ENCODE measurements at regions of chr7 and their contacts with region 1.

Region 1: DNA sequence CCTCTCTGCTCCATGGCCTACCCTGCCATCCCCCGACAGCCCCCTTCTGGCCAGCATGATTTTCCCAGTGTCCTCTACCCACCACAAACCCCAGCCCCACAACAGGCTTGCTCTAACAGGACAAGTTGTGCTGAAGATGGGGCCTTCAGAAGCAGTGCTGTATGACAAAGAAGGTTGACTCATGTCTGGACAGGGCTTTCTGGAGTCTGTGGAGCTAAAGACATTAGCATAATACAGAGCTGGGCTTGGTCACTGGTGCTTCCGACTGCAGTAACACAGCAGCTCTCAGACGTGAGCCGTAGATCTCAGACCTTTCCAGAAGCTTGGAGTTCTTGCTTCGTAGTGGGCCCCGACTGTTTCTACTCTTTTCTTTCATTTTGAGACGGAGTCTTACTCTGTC is 100.5 kb downstream of the GTF2IRD1 start:
- DNase-seq: no peak
- H3K4me3 ChIP-seq: no peak overlapping the region
- CTCF ChIP-seq: no peak
- POLR2A ChIP-seq: no peak

Region 2: DNA sequence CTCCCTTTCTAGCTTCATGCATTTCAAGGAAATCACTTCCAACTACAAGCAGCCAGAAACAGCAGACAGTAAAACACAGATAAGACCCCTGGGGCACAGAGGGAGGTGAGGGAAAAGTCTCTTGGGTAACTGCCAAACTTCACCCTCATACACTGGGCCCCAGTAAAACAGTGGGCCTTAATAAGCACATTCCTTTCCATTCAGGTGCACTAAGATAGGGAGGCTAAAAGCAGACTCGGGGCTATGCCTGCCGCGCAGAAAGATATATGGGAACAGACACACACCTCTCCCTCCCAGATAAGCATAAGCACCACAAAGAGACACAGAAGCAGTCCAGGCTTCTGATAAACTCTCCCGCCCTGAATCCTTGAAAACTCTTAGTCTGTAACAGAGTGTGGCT is 1843.2 kb before region 1 on chr7:
- intact Hi-C with region 1: no loop called
- DNase-seq: no peak
- H3K4me3 ChIP-seq: no peak overlapping the region
- CTCF ChIP-seq: no peak
- POLR2A ChIP-seq: no peak

Region 3: DNA sequence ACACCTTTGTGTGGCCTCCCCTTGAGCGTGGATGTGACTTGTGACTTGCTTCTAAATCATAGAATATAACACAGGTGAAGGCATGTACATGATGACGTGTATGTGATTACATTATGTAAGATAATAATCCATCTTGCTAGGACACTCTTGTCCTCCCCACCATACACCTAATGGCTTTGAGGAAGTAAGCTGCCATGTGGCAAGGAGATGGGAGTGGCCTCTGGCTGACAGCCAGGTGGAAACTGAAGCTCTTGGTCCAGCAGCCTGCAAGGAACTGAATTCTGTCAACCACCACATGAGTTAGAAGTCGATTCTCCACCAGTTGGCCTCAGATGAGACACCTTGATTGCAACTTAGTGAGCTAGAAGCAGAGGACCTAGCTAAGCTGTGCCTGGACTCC is 593.6 kb before region 1 on chr7:
- intact Hi-C with region 1: no loop called
- DNase-seq: peak in 1 of 2 donors; percentile 83
- H3K4me3 ChIP-seq: no peak overlapping the region
- CTCF ChIP-seq: no peak
- POLR2A ChIP-seq: no peak

Region 4: DNA sequence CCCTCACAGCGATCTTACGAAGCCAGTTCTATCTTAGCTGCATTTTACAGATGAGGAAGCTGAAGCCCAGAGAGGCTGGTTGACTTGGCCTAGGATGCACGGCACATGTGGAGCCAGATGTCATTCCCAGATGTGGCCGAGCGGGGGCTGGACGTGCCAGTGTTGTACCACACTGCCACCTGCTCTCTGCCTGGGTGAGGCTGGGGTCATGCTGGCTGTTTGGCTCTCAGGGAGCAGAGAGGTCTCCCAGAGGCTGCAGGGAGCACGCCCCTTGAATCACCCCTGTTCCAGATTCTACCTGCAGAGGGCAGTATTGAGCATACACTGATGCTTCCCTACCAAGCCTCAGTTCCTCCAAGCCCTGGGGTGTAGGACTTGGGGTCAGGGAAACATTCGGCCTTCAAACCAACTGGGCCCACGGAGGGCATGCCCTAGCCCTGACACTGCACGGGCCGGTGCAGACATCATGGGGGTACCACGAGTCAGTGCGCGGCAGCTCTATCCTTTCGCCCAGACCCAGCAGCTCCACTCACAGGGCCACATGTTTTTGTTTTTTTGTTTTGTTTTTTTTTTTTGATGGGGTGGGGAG is 104.3 kb before region 1 on chr7:
- intact Hi-C with region 1: loop called (anchors 10 kb)
- DNase-seq: peak in 1 of 2 donors; percentile 47
- H3K4me3 ChIP-seq: no peak overlapping the region
- CTCF ChIP-seq: peak in 1 of 3 donors; percentile 25
- POLR2A ChIP-seq: no peak

Region 5: DNA sequence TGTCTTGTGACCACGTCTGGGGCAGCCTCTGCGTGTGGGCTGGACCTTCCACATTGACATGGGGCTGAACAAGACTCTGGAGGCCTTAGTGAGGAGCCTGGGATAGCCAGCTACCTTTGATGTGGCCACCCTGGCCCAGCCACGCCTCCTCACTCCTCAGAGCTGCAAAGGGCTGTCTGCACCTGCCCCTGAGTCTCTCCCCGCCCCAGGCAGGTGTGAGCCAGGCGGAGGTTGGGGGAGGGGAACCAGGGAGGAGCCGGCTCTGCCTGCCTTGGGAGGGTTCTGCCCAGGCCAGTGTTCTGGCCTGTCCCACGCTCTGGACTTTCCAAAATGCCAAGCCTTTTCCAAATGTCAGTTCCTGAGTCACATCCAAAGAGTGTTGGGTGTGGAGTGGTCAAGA is 28.3 kb before region 1 on chr7:
- intact Hi-C with region 1: no loop called
- DNase-seq: peak in 1 of 2 donors; percentile 22
- H3K4me3 ChIP-seq: no peak overlapping the region
- CTCF ChIP-seq: no peak
- POLR2A ChIP-seq: no peak